Activated CD4-positive, alpha-beta memory T cell treated with anti-CD3 and anti-CD28 coated beads for 36 hours (primary cell): ENCODE measurements at regions of chrX and their contacts with region 1.

Region 1: GRCh38 chrX:18425199-18426003 is at the start of gene CDKL5:
- DNase-seq: peak; percentile 97
- H3K4me3 Mint-ChIP-seq: peak within 1 kb of the TSS; percentile 77
- H3K27ac Mint-ChIP-seq: no peak within 1 kb of the TSS
- H3K4me1 Mint-ChIP-seq: peaks cover 9% of the 10 kb centered on the region
- H3K27me3 Mint-ChIP-seq: peaks cover 3% of the 10 kb centered on the region
- total RNA-seq, gene CDKL5: 1.2 to 1.4 TPM

Region 2: DNA sequence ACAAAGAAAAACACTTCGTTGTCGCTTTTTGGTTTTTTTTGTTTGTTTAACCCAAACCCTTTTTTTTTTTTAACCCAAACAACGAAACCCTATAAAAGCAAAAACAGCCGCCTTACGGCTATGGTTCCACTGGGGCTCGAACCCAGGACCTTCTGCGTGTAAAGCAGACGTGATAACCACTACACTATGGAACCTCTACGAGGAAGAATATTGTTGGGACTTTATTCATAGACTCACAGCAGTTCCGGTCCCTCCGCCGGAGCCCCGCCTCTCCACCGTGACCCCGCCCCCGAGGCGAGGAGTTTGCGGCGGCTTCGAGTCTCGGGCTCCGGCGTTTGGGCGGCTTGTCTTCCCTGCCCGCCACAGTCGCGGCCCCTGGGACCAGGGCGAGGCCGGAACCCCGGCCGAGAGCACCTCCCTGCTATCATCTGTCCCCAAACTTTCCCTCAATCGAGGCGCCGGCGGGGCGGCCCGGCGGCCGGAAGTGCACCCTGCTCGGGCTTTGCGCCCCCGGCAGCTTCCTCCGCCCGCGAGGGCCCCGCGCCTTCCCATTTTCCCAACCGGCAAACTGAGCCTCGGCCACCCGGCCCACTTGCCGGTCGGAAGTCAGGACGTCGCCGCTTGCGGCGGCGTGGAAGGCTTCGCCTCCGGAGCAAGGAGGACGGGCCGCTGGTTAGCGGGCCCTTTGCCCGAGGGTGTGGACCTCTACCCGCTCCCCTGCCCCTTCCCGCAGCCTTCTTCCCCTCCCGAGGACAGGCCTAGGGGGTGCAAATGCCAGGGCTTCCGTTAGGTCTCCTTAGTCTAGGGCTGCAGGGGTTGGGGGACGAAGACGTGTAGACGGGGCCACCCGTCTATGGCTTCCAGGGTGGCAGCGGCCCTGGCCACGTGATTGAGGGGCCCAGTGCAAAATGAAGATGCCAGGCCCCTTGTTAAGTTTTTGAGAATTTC is 249.7 kb after region 1 on chrX:
- CTCF ChIA-PET with region 1: no interaction called
- POLR2A ChIA-PET with region 1: no interaction called
- intact Hi-C with region 1: loop called (anchors 2 kb)
- DNase-seq: peak; percentile 79
- H3K4me3 Mint-ChIP-seq: peak overlapping the region; percentile 69
- H3K27ac Mint-ChIP-seq: peak overlapping the region; percentile 77
- H3K4me1 Mint-ChIP-seq: no peaks in the 10 kb centered on the region
- H3K27me3 Mint-ChIP-seq: no peaks in the 10 kb centered on the region

Region 3: GRCh38 chrX:18886344-18887161 is 461.2 kb after region 1 on chrX:
- CTCF ChIA-PET with region 1: no interaction called
- POLR2A ChIA-PET with region 1: no interaction called
- intact Hi-C with region 1: loop called (anchors 5 kb)
- DNase-seq: peak; percentile 70
- H3K4me3 Mint-ChIP-seq: peak overlapping the region; percentile 81
- H3K27ac Mint-ChIP-seq: peak overlapping the region; percentile 89
- H3K4me1 Mint-ChIP-seq: peaks cover 20% of the 10 kb centered on the region
- H3K27me3 Mint-ChIP-seq: no peaks in the 10 kb centered on the region

Region 4: DNA sequence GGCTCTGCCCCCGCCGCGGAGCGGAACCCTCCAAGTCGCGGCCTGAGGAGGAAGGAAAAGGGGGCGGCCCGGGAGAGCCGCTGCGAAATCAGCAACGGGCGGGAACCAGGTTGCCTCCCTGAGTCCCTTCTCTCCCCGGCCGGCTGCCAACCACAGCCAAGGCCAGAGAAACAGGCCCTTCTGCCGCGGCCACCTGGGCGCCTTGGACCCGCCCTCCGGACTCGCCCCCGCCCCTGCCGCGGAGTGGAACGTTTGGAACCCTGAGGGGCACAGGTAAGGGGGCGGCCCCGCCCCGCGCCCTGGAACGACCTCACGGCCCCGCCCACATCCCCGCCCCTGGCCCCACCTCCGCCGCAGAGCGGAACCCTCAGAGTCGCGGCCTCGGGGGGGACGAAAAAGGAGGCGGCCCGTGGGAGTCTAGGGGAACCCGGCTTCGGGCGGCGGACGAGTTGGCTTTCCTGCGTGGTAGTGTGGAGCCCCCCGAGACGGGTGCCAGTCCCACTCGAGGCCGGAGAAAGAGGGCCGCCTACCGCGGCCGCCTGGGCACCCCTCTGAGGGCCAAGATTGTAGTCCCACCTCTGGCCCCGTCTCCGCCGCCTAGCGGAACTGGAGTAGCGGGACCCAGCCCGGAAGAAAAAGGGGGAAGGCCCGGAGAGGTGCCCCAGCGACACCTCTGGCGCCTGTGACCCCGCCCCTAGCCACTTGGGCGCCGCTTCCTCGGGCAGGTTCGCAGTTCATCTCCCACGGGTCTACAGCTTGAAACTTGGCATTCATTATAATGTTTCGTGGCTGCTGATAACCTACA is 559.2 kb after region 1 on chrX:
- CTCF ChIA-PET with region 1: no interaction called
- POLR2A ChIA-PET with region 1: no interaction called
- intact Hi-C with region 1: loop called (anchors 1 kb)
- DNase-seq: peak; percentile 89
- H3K4me3 Mint-ChIP-seq: peak overlapping the region; percentile 86
- H3K27ac Mint-ChIP-seq: peak overlapping the region; percentile 84
- H3K4me1 Mint-ChIP-seq: peaks cover 6% of the 10 kb centered on the region
- H3K27me3 Mint-ChIP-seq: no peaks in the 10 kb centered on the region

Region 5: GRCh38 chrX:19343535-19344408 is 918.4 kb after region 1 on chrX and contains the start of gene PDHA1:
- CTCF ChIA-PET with region 1: no interaction called
- POLR2A ChIA-PET with region 1: no interaction called
- intact Hi-C with region 1: loop called (anchors 10 kb)
- DNase-seq: peak; percentile 95
- H3K4me3 Mint-ChIP-seq: peak within 1 kb of the TSS; percentile 81
- H3K27ac Mint-ChIP-seq: peak within 1 kb of the TSS; percentile 76
- H3K4me1 Mint-ChIP-seq: peaks cover 22% of the 10 kb centered on the region
- H3K27me3 Mint-ChIP-seq: no peaks in the 10 kb centered on the region
- total RNA-seq, gene PDHA1: 245 TPM

Region 6: DNA sequence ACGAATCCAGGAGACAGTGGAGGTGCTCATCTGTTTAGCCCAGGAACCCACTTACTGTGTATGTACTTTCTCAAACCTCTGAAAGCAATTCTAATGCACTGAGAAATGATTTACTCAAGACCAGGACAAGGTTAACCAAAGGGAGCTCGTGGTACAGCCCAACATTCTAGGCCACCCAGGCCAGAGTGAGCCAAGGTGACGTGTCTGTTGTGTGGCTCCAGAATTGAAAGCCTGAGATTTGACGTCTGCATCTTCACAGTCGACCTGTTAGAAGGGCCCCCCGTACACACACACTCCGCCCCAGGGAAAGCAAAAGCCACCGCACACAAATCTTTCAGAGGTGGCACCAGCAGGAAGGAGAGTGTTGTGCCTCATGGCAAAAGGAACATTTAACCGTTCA is 1087.6 kb after region 1 on chrX:
- CTCF ChIA-PET with region 1: no interaction called
- POLR2A ChIA-PET with region 1: no interaction called
- intact Hi-C with region 1: no loop called
- DNase-seq: no peak
- H3K4me3 Mint-ChIP-seq: no peak overlapping the region
- H3K27ac Mint-ChIP-seq: no peak overlapping the region
- H3K4me1 Mint-ChIP-seq: no peaks in the 10 kb centered on the region
- H3K27me3 Mint-ChIP-seq: peaks cover 12% of the 10 kb centered on the region